Activated CD8-positive, alpha-beta T cell treated with anti-CD3 and anti-CD28 coated beads for 36 hours (primary cell): ENCODE measurements at regions of chr1 and their contacts with region 1.

Region 1: DNA sequence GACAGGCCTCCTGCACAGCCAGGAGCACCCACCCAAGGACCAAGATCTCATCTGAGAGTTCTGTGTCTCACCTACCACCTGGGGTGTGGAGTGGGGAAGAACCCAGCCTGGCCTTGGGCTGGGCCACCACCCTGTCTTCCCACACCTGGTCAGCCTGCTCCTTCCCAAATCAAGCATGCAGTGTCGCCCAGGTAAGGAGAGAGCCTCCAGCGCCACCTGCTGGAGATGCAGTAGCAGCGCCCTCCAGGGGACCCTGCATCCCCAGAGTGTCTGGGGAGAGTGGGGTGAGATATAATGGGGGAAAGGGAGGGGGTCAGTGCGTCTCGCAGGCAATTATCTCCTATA is 32.3 kb downstream of the KIAA2013 start:
- DNase-seq: peak; percentile 72
- ATAC-seq: peak; percentile 96
- H3K4me3 Mint-ChIP-seq: no peak overlapping the region
- H3K27ac Mint-ChIP-seq: no peak overlapping the region
- H3K4me1 Mint-ChIP-seq: no peaks in the 10 kb centered on the region
- H3K27me3 Mint-ChIP-seq: peaks cover 26% of the 10 kb centered on the region
- CTCF ChIP-seq: peak; percentile 87

Region 2: GRCh38 chr1:11858968-11859871 is 34.7 kb before region 1 on chr1:
- CTCF ChIA-PET with region 1: no interaction called
- POLR2A ChIA-PET with region 1: no interaction called
- intact Hi-C with region 1: loop called (anchors 5 kb)
- DNase-seq: peak; percentile 83
- ATAC-seq: peak; percentile 91
- H3K4me3 Mint-ChIP-seq: no peak overlapping the region
- H3K27ac Mint-ChIP-seq: no peak overlapping the region
- H3K4me1 Mint-ChIP-seq: peaks cover 5% of the 10 kb centered on the region
- H3K27me3 Mint-ChIP-seq: peaks cover 46% of the 10 kb centered on the region
- CTCF ChIP-seq: peak; percentile 21